Right cardiac atrium (tissue), 5 donors: ENCODE measurements at regions of chr11 and their contacts with region 1.

Region 1: GRCh38 chr11:207208-207862 is at the starts of genes BET1L and RIC8A:
- DNase-seq: peak; percentile 96 to 99 (median 98)
- ATAC-seq: peak; percentile 91 to 93
- H3K4me3 ChIP-seq: peak within 1 kb of the TSS; percentile 79
- H3K27ac ChIP-seq: peak within 1 kb of the TSS; percentile 93
- H3K4me1 ChIP-seq: peaks cover 14% of the 10 kb centered on the region
- H3K27me3 ChIP-seq: no peaks in the 10 kb centered on the region
- total RNA-seq, gene BET1L: 27.1 to 39.9 (median 35.5) TPM
- total RNA-seq, gene RIC8A: 52.4 to 80.6 (median 58.5) TPM

Region 2: GRCh38 chr11:241634-242033 is 34.3 kb after region 1 on chr11:
- intact Hi-C with region 1: loop called in 1 of 4 experiments (anchors 5 kb)
- DNase-seq: no peak
- ATAC-seq: peak in 1 of 2 donors; percentile 42
- H3K4me3 ChIP-seq: no peak overlapping the region
- H3K27ac ChIP-seq: peak overlapping the region; percentile 95
- H3K4me1 ChIP-seq: no peaks in the 10 kb centered on the region
- H3K27me3 ChIP-seq: no peaks in the 10 kb centered on the region

Region 3: GRCh38 chr11:355581-356458 is 148.5 kb after region 1 on chr11:
- intact Hi-C with region 1: loop called in 1 of 4 experiments (anchors 5 kb)
- DNase-seq: peak; percentile 98
- ATAC-seq: peak; percentile 91 to 93
- H3K4me3 ChIP-seq: peak overlapping the region; percentile 18
- H3K27ac ChIP-seq: peak overlapping the region; percentile 98
- H3K4me1 ChIP-seq: peaks cover 3% of the 10 kb centered on the region
- H3K27me3 ChIP-seq: no peaks in the 10 kb centered on the region